Spleen (tissue), 13 donors: ENCODE measurements at regions of chr6 and their contacts with region 1.

Region 1: GRCh38 chr6:56708810-56709597 is 66.3 kb upstream of the DST start:
- DNase-seq: no peak
- H3K4me3 ChIP-seq: no peak overlapping the region
- H3K27ac ChIP-seq: peak overlapping the region in 4 of 8 donors; percentile 9 to 40 (median 21)
- H3K4me1 ChIP-seq: peaks cover 0 to 27% (median 13%) of the 10 kb centered on the region in 6 donors
- H3K27me3 ChIP-seq: no peaks in the 10 kb centered on the region
- CTCF ChIP-seq: peak in 10 of 11 experiments; percentile 21 to 67 (median 53)
- POLR2A ChIP-seq: no peak

Region 2: DNA sequence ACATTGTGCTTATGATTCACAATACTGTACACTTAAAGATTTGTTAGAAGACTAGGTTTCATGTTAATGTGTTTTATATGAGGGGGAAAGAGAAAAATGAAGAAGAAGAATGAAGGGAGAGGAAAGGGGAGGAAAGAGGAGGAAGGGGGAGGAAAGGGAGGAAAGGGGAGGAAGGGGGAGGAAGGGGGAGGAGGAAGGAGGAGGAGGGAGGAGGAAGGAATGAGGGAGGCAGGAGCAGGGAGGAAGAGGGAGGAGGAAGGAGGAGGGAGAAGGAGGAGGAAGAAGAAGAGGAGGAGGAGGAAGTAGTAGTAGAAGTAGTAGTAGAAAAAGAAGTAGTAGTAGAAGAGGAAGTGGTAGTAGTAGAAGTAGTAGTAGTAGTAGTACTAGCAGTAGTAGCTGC is 532.3 kb before region 1 on chr6:
- intact Hi-C with region 1: no loop called
- DNase-seq: no peak
- H3K4me3 ChIP-seq: no peak overlapping the region
- H3K27ac ChIP-seq: no peak overlapping the region
- H3K4me1 ChIP-seq: no peaks in the 10 kb centered on the region
- H3K27me3 ChIP-seq: no peaks in the 10 kb centered on the region
- CTCF ChIP-seq: no peak
- POLR2A ChIP-seq: no peak

Region 3: DNA sequence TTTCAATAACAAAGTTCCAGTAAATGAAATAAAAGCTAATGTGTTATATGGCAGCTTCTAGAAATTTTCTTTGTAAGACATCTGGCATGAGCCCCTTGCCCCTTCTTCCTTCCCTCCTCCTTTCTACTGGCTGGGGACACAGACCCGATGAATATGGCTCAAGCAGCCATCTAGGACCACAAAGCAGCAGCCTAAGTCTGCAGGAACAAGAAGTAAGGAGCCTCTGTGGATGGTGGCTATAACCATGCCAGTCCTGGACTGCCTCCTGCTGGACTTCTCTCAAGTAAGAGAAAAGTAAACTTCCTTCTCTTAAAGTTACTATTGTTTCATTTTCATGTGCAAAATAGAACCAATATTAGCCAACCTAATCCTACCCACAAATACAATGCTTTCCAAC is 48.6 kb after region 1 on chr6:
- intact Hi-C with region 1: loop called (anchors 2 kb)
- DNase-seq: no peak
- H3K4me3 ChIP-seq: no peak overlapping the region
- H3K27ac ChIP-seq: no peak overlapping the region
- H3K4me1 ChIP-seq: peaks cover 0 to 22% (median 9%) of the 10 kb centered on the region in 6 donors
- H3K27me3 ChIP-seq: no peaks in the 10 kb centered on the region
- CTCF ChIP-seq: peak in 3 of 11 experiments; percentile 22 to 26 (median 26)
- POLR2A ChIP-seq: no peak

Region 4: DNA sequence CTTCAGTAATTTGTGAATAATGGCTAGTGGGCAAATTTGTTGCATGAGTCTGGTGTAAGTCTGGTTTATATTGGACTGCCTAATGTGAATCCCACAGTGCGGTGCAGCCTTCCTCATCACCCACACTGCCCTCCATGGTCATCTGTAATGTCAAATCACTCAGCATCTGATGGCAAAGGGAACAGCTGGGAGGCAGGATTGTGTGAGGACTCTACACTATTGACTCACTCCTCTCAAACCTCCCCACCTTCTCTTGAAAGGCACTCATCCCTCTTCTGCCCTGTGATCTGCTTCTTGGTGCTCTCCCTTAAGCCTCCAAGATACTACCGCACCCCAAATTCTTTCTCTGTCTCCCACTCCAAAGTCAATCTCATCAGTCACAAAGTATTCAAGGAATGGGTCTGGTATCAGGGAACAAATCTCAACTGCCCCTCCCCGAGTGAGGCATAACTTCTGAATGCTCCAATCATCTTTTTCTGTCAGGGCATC is 99.9 kb after region 1 on chr6:
- intact Hi-C with region 1: no loop called
- DNase-seq: no peak
- H3K4me3 ChIP-seq: no peak overlapping the region
- H3K27ac ChIP-seq: no peak overlapping the region
- H3K4me1 ChIP-seq: no peaks in the 10 kb centered on the region
- H3K27me3 ChIP-seq: no peaks in the 10 kb centered on the region
- CTCF ChIP-seq: no peak
- POLR2A ChIP-seq: no peak

Region 5: DNA sequence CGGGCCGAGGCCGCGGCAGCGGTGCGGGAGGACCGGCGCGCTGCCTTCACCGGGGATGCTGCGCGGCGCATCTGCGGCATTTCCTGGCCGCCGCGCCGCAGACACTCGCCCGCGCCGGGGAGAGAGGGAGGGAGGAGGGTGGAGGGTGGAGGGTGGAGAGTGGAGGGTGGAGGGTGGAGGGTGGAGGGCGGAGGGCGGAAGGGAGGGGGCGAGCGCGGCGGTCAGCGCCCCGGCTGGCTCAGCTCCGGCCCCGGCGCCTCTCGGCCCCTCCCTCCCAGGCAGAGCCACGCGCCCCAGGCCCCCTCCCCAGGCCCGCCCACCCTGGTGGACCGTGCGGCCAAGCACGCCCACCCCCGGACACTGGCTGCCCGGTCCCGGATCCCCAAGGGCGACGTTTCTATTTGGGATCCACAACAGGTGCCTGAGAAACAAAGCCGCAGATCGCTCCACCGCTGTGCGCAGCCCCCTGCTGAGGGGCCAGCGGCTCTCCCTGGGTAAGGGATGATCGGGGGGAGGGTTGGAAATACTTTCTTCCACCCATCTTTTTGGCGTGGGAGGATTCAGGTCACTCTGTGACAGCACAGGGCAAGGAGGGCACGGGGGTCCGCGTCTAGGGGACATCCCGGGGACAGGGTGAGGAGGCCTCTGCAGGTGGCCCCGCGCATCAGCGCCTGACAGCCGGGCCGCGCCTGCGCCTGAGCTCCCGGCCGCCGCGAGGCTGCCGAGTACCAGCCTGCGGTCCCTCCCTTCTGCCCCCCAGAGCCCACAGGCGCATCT is 134.8 kb after region 1 on chr6:
- intact Hi-C with region 1: loop called (anchors 10 kb)
- DNase-seq: peak; percentile 87
- H3K4me3 ChIP-seq: peak overlapping the region; percentile 31 to 78 (median 56)
- H3K27ac ChIP-seq: peak overlapping the region; percentile 29 to 88 (median 82)
- H3K4me1 ChIP-seq: peaks cover 0 to 36% (median 16%) of the 10 kb centered on the region in 6 donors
- H3K27me3 ChIP-seq: peaks cover 0 to 31% (median 14%) of the 10 kb centered on the region in 7 donors
- CTCF ChIP-seq: peak in 8 of 11 experiments; percentile 15 to 71 (median 56)
- POLR2A ChIP-seq: peak in 1 of 3 donors; percentile 20